Activated T-helper 1 cell treated with anti-CD3 and anti-CD28 coated beads, Interleukin-12 subunit alpha, Interleukin-12 subunit beta, Interleukin-2, Interleukin-4 antibody, amounts not matched to agents 30 ng/mL and 10 ng/mL and 1 ng/mL, durations not matched to agents 14 hours and 24 hours and 36 hours (primary cell): ENCODE measurements at regions of chr6 and their contacts with region 1.

Region 1: DNA sequence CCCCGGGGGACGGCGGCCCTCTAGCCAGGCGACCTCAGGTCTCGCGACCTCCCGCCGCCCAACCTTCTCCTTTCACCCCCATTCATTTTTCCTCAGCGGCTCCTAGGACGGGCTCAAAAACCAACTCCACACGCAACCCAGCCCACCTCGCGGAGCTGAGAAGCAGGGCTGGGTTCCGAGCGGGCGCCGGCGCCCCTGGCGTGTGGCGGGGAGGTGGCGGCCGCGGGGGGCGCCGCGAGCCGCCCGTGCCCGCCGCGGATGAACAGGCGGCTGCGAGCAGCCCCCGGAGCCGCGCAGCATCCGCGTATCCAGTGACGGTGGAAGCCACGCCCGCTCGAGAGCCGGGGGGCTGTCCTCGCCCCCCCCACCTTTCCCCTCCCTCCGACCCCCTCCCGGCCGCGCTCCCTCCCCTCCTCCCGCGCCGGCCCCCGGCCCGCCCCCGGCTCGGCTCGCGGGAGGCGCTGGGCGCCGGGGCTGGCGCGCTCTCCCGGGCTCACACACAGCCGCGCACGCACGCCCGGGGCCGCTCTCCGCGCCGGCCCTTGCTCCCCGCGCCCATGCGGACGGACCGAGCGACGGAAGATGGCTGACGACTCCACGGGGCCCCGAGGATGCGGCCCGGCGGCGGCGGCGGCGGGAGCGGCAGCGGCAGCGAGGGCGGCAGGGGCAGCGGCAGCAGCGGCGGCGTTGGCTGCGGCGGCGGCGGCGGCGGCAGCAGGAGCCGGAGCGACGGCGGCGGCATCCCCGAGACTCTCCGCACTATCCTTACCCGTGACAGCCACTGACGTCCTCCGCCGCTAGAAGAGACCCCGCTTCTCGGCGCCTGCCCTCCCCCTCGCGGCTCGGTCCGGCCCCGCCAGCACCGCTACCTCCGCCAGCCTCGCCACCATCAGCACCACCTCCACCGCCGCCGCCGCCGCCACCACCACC is at the start of gene SOBP:
- DNase-seq: peak; percentile 9
- H3K4me3 Mint-ChIP-seq: peak within 1 kb of the TSS; percentile 91
- H3K27ac Mint-ChIP-seq: peak within 1 kb of the TSS; percentile 36
- H3K4me1 Mint-ChIP-seq: peaks cover 28% of the 10 kb centered on the region
- H3K27me3 Mint-ChIP-seq: peaks cover 50% of the 10 kb centered on the region
- total RNA-seq, gene SOBP: 0.15 and 0.16 TPM in 2 replicates

Region 2: DNA sequence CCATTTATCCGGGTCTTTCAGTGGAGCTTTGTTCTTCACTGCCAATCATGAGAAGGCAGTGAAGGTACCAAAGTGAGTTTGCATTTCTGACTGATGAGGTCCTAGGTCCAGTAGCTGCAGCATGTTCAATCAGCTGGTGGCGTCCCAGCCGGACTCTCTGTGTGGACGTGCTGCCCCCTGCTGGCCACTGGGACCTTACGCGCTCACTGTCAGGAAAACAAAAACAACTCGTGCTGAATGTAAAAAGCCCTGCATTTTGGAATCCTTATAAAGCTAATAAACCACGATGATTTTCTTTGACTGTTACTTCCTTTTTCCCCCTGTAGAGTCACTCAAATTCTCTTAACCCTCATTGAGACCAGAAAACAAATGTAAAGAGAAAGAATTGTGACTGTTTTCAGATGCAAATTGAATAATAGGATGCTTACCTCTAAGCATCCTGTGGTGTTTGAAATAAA is 510.4 kb before region 1 on chr6:
- intact Hi-C with region 1: loop called (anchors 5 kb)
- DNase-seq: peak; percentile 60
- H3K4me3 Mint-ChIP-seq: no peak overlapping the region
- H3K27ac Mint-ChIP-seq: no peak overlapping the region
- H3K4me1 Mint-ChIP-seq: no peaks in the 10 kb centered on the region
- H3K27me3 Mint-ChIP-seq: peaks cover 30% of the 10 kb centered on the region

Region 3: GRCh38 chr6:107318100-107318736 is 171.7 kb before region 1 on chr6:
- intact Hi-C with region 1: loop called (anchors 10 kb)
- DNase-seq: no peak
- H3K4me3 Mint-ChIP-seq: no peak overlapping the region
- H3K27ac Mint-ChIP-seq: no peak overlapping the region
- H3K4me1 Mint-ChIP-seq: peaks cover 14% of the 10 kb centered on the region
- H3K27me3 Mint-ChIP-seq: no peaks in the 10 kb centered on the region

Region 4: GRCh38 chr6:107634324-107635056 is 144.6 kb after region 1 on chr6:
- intact Hi-C with region 1: loop called (anchors 2 kb)
- DNase-seq: no peak
- H3K4me3 Mint-ChIP-seq: no peak overlapping the region
- H3K27ac Mint-ChIP-seq: no peak overlapping the region
- H3K4me1 Mint-ChIP-seq: peaks cover 6% of the 10 kb centered on the region
- H3K27me3 Mint-ChIP-seq: peaks cover 67% of the 10 kb centered on the region

Region 5: GRCh38 chr6:108157234-108157980 is 667.5 kb after region 1 on chr6:
- intact Hi-C with region 1: loop called (anchors 5 kb)
- DNase-seq: no peak
- H3K4me3 Mint-ChIP-seq: no peak overlapping the region
- H3K27ac Mint-ChIP-seq: peak overlapping the region; percentile 52
- H3K4me1 Mint-ChIP-seq: peaks cover 5% of the 10 kb centered on the region
- H3K27me3 Mint-ChIP-seq: peaks cover 90% of the 10 kb centered on the region

Region 6: DNA sequence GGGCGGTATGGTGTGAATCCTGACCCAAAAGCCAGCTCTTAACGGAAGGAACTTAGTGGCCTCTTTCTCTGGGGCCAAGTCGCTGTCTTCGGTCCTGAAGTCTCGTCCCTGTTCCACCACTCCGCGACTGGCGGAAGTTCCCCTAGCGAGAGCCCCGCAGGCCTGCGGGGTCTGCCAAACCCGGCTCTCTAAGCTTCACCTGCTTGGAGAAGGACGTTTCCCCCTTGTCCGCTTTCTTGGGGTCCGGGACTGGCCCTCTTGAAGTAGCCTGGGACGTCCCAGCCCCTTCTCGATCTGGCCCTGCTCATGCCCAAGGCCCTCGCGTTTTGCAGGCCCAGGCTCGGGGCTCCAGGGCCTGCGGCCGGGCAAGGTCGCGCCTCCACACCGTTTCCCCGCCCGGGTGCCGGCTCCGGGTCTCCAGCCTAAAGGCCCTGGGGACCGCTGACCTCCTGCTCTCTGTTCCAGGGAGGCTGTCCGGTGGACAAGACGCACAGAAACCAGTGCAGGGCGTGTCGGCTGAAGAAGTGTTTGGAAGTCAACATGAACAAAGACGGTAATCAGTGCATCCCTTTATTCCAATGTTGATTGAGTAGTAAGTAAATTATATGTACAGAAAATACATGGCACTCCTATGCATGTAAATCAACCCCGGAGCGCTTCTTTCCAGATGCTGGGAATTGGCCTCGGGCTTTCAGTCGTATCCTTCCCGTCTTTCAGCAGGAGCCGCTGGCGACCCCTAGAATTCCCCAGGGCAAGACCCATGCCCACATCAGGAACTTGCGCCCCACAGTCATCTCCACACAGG is 684.7 kb after region 1 on chr6:
- intact Hi-C with region 1: loop called (anchors 5 kb)
- DNase-seq: peak; percentile 20
- H3K4me3 Mint-ChIP-seq: no peak overlapping the region
- H3K27ac Mint-ChIP-seq: no peak overlapping the region
- H3K4me1 Mint-ChIP-seq: peaks cover 5% of the 10 kb centered on the region
- H3K27me3 Mint-ChIP-seq: peaks cover 93% of the 10 kb centered on the region

Region 7: DNA sequence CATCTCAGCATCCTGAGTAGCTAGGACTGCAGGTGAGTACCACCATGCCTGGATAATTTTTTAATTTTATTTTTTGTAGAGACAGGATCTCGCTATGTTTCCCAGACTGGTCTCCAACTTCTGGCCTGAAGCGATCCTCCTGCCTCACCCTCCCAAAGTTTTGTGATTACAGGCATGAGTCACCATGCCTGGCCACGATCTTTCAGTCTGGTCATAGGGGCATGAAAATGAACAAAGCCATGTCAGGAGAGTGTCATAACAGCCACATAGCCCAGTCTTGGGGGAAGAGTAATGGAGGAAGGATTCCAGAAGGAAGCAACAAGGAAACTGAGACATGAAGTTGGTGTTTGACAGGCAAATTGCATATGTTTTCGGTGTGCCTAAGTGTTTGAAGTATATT is 787.9 kb after region 1 on chr6:
- intact Hi-C with region 1: no loop called
- DNase-seq: no peak
- H3K4me3 Mint-ChIP-seq: no peak overlapping the region
- H3K27ac Mint-ChIP-seq: no peak overlapping the region
- H3K4me1 Mint-ChIP-seq: no peaks in the 10 kb centered on the region
- H3K27me3 Mint-ChIP-seq: peaks cover 13% of the 10 kb centered on the region